GM13977 (cell line): ENCODE measurements at regions of chr11 and their contacts with region 1.

Region 1: GRCh38 chr11:111586388-111586831 is 15.8 kb upstream of the SIK2 start:
- DNase-seq: peak; percentile 43
- CTCF ChIP-seq: peak; percentile 62

Region 2: DNA sequence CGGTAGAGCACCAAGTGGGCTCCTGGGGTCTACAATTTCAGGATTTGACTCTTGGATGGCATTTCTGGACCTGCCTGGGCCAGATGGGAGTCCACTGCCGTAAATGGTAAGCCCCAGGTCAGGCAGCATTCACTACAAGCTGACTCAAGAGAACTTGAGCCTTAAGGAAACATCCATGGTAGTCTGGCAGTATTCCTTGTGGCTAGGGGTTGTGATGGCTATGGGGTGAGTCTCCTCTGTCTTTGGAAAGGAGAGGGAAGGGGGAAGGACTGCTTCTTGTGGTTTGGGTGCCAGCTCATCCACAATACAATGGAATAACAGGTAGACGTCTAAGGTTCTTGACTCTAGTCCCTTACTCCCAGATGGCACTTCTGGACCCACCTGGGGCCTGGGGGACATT is 373.2 kb before region 1 on chr11:
- in situ Hi-C with region 1: no loop called
- DNase-seq: no peak
- CTCF ChIP-seq: no peak

Region 3: DNA sequence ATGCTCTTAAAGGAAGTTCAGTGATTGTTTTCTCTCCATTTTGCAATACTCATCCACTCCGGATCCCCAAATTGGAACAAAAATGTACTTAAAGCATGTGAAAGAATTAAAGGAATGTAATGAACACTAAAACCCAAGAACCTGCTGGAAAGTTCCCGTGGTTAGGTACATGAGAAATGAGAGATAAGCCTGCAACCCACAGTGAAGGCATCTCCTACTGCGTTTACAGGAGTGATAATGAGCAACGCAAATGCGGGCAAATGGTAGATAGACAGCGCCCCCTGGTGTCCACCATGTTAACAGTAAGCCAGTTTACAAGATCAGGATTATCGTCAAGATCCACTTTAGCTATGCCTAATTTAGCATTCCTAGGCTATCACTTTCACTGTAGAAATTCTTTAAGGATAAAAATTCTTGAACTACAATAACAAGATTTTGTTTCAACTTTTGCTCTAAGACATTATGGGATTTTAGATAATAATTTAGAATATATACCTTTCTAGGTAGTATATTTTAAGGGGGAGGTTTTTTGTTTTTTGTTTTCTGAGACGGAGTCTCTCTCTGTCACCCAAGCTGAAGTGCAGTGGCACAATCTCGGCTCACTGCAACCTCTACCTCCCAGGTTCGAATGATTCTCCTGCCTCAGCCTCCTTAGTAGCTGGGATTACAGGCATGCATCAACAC is 255.1 kb after region 1 on chr11:
- in situ Hi-C with region 1: loop called (anchors 10 kb)
- DNase-seq: peak; percentile 70
- CTCF ChIP-seq: peak; percentile 86